GM10248 (cell line): ENCODE measurements at regions of chr5 and their contacts with region 1.

Region 1: DNA sequence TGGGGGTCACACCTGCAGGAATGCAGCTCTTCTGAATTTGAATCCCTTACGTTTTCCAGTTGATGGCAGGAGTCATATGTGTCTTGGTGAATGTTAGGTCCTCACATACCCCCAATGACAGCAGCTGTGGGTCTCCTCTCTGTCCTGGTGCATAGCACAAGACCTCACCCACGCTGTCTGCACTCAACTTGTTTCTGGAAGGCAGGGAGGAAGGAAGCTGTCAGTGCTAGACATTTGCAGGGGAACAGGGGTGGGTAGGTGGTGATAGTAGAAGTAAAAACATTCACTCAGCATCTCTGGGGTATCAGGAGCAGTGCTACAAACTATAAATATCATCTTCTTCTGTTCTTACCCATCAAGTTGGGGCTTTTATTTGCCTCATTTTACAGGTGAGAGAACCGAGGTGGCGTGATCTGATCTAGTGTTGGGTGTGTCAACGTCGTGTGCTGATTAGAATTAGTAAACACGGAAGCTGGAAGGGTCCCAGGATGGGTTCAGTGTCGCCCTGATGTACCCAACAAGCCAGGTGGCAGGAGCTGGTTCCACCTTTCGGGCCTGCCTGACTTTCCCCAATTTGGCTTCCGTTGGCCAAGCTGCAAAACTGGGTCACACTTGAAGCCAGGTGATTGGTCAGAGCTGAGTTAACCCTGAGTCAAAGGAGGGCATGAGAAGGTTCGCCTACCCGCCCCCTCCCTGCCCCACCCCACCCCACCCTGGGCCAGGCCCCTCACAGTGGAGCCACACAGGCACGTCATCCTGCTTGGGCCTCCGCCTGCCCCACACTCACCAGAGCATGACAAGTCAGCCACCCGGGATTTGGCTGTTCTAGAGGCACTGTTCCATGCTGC is 15.8 kb downstream of the ERGIC1 start:
- DNase-seq: peak; percentile 48
- CTCF ChIP-seq: no peak

Region 2: DNA sequence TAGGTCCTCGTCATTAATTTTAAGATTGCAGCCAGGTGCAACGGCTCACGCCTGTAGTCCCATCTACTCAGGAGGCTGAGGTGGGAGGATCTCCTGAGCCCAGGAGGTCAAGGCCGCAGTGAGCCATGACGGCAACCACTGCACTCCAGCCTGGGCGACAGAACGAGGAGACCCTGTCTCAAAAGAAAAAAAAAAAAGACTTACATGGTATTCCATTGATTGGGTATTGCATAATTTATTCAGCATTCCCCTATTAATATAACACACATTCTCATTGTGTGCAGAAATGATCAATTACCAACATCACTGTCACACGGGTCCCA is 141.7 kb before region 1 on chr5:
- CTCF ChIA-PET with region 1: no interaction called
- POLR2A ChIA-PET with region 1: no interaction called
- DNase-seq: no peak
- CTCF ChIP-seq: no peak

Region 3: GRCh38 chr5:172733131-172733973 is 116.5 kb before region 1 on chr5:
- CTCF ChIA-PET with region 1: no interaction called
- POLR2A ChIA-PET with region 1: no interaction called
- DNase-seq: no peak
- CTCF ChIP-seq: no peak

Region 4: DNA sequence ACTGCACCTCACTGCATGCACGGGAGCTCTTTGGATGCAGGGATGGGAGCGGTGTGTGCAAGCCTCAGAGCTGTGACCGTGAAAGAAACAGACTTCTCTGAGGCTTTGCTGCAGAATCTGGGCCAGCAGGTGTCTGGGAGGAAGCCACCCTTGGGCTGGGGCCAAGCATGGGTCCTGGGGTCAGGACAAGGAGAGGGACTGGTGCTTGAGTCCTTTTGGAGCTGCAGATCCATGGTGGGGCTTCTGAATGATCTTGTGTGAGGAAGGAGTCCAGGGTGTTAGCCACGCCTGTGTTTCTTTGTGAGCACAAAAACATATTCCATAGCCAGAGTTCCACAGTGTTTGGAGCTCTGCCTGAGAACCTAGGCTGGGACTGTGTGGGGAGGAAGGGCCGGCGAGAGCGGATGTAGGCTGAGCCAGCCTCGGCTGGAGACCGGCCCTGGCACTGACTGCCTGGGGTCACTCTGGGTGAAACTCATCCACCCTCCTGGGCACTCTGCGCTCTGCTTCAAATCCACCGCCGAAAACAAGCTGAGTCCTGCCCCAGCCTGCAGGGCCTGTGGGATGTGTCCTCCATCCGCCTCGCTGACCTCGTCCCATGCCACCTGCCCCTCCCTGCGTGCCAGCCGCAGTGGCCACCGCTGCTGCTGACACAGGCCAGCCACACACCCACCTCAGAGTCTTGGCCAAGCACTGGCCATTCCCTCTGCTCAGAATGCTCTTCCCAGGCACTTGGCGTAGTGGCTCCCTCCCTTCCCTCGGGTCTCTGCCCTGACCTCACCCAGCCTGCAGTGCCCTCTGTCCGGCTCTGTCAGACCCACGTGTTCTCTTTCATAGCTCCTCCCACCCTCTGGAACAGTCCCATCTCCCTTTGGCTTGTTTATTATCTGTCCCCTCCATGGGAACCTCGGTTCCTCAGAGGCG is 11.0 kb after region 1 on chr5:
- CTCF ChIA-PET with region 1: interaction called, 17 read pairs
- POLR2A ChIA-PET with region 1: no interaction called
- DNase-seq: no peak
- CTCF ChIP-seq: no peak